ENCODE measurements at regions of chr1 and their contacts with region 1.

Region 1: GRCh38 chr1:156282479-156283222 is at the start of gene SMG5:
- DNase-seq: peak; percentile 98
- ATAC-seq: peak; percentile 94
- H3K4me3 Mint-ChIP-seq: peak within 1 kb of the TSS; percentile 90
- H3K27ac Mint-ChIP-seq: peak within 1 kb of the TSS; percentile 87
- H3K4me1 Mint-ChIP-seq: peaks cover 40% of the 10 kb centered on the region
- H3K27me3 Mint-ChIP-seq: no peaks in the 10 kb centered on the region
- total RNA-seq, gene SMG5: 75.2 to 78.2 TPM

Region 2: GRCh38 chr1:156146020-156146768 is 136.5 kb before region 1 on chr1:
- CTCF ChIA-PET with region 1: interaction called, 29 read pairs
- POLR2A ChIA-PET with region 1: interaction called, 3 read pairs
- DNase-seq: peak; percentile 72
- ATAC-seq: peak; percentile 80
- H3K4me3 Mint-ChIP-seq: peak overlapping the region; percentile 63
- H3K27ac Mint-ChIP-seq: peak overlapping the region; percentile 85
- H3K4me1 Mint-ChIP-seq: peaks cover 47% of the 10 kb centered on the region
- H3K27me3 Mint-ChIP-seq: no peaks in the 10 kb centered on the region

Region 3: DNA sequence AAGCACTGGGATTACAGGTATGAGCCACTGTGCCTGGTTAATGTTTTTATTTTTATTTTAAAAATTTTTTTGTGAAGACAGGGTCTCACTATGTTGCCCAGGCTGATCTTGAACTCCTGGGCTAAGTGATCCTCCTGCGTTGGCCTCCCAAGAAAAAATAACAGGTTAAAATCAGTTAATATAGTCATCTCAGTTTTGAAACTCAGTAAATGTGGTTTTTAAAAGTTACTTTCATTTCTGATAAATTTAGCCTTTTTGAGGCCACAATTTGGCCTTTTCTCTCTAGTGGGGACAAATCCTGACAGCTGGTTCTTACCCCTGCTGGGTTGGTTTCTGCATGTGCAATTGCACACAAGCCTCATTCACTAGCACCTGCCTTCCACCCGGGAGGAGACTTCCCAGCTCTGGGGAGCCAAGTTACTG is 56.5 kb before region 1 on chr1:
- CTCF ChIA-PET with region 1: interaction called, 14 read pairs
- POLR2A ChIA-PET with region 1: interaction called, 8 read pairs
- DNase-seq: no peak
- ATAC-seq: peak; percentile 5
- H3K4me3 Mint-ChIP-seq: no peak overlapping the region
- H3K27ac Mint-ChIP-seq: peak overlapping the region; percentile 90
- H3K4me1 Mint-ChIP-seq: peaks cover 51% of the 10 kb centered on the region
- H3K27me3 Mint-ChIP-seq: no peaks in the 10 kb centered on the region

Region 4: DNA sequence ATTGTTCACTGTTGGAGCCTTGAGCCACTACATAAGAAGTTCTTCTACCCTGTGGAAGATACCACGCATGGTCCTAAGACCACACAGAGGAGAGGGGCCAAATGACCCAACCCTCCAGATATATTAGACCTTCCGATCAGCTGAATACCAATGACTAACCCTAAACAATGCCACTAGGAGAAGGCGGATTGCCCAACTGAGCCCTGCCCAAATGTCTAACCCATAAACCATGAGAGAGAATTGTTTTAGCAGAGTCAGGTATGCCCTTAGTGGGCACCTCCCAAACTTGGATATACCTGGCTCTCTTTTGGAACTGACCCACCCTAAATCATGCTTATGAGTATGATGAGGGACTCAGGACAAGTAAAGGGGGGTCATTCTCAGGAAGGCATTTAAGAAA is 12.3 kb before region 1 on chr1:
- CTCF ChIA-PET with region 1: interaction called, 12 read pairs
- POLR2A ChIA-PET with region 1: interaction called, 12 read pairs
- DNase-seq: no peak
- ATAC-seq: no peak
- H3K4me3 Mint-ChIP-seq: no peak overlapping the region
- H3K27ac Mint-ChIP-seq: no peak overlapping the region
- H3K4me1 Mint-ChIP-seq: no peaks in the 10 kb centered on the region
- H3K27me3 Mint-ChIP-seq: no peaks in the 10 kb centered on the region

Region 5: DNA sequence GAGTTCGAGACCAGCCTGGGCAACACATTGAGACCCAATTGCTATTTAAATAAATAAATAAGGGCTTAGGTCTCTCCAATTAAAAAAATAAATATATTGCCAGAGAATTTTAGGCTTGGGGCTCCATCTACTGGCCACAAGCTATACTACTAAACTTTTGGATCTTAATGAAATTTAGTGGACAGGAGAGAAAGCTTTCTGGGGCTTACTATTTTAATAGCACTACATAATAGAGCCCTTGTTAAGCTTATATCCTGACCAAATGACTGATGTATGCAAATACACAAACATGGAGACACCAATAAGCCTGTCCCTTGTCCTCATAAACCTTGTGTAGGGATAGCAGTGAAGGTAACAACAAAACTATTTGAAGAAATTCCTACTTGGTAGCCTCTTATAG is 37.0 kb after region 1 on chr1:
- CTCF ChIA-PET with region 1: interaction called, 18 read pairs
- POLR2A ChIA-PET with region 1: interaction called, 3 read pairs
- DNase-seq: peak; percentile 45
- ATAC-seq: no peak
- H3K4me3 Mint-ChIP-seq: no peak overlapping the region
- H3K27ac Mint-ChIP-seq: no peak overlapping the region
- H3K4me1 Mint-ChIP-seq: no peaks in the 10 kb centered on the region
- H3K27me3 Mint-ChIP-seq: no peaks in the 10 kb centered on the region

Measured in activated CD8-positive, alpha-beta T cell treated with anti-CD3 and anti-CD28 coated beads, Interleukin-2, amount 10 ng/mL, durations not matched to agents 7 days and 5 days (primary cell).